RWPE1 (cell line): ENCODE measurements at regions of chr17 and their contacts with region 1.

Region 1: DNA sequence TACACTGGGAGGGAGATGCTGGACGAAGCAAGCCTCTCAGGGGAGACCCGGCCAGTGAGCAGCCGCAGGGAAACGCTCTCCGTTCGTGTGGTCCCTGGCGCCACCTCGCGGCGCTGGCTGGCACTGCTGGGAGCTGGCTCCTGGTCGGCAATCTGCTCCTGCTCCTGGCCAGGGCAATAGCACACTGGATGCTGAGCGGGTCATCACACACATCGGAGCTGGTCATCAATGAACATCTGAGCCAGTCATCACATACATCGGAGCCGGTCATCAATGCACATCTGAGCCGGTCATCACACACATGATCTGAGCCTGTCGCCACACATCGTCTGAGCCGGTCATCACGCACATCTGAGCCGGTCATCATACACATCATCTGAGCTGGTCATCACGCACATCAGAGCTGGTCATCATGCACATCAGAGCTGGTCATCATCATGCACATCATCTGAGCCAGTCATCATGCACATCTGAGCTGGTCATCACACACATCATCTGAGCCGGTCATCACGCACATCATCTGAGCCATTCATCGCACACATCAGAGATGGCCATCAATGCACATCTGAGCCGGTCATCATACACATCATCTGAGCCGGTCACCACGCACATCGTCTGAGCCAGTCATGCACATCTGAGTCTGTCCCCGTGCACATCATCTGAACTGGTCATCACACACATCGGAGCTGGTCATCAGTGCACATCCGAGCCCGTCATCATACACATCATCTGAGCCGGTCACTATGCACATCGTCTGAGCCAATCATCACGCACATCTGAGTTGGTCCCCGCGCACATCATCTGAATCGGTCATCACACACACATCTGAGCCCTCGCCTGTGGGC is 217.3 kb downstream of the RBFOX3 start:
- DNase-seq: peak; percentile 66
- H3K27ac ChIP-seq: no peak overlapping the region
- CTCF ChIP-seq: peak; percentile 97

Region 2: GRCh38 chr17:79087428-79088143 is 306.0 kb before region 1 on chr17:
- CTCF ChIA-PET with region 1: interaction called, 70 read pairs
- POLR2A ChIA-PET with region 1: no interaction called
- DNase-seq: peak; percentile 74
- H3K27ac ChIP-seq: no peak overlapping the region
- CTCF ChIP-seq: peak; percentile 94

Region 3: DNA sequence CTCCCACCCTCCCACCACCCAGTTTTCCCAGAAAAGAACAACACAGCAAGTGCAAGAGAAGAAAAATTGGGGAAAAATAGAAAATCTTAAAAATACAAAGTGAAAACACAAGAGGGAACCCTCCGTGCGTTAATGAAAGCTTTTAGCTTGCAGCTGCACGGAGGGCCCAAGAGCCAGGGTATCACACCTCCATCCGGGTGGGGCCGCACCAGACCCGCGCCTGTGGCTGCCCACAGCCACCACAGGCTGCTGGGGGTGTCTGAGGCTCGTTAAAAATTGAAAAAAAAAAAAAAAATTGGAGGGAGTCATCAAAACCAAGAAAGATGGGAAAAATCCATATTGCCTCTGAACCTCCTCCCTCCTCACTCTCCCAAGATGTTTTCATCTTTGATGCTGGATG is 300.3 kb before region 1 on chr17:
- CTCF ChIA-PET with region 1: interaction called, 70 read pairs
- POLR2A ChIA-PET with region 1: no interaction called
- DNase-seq: no peak
- H3K27ac ChIP-seq: no peak overlapping the region
- CTCF ChIP-seq: no peak

Region 4: GRCh38 chr17:79188048-79188447 is 205.5 kb before region 1 on chr17:
- CTCF ChIA-PET with region 1: interaction called, 88 read pairs
- POLR2A ChIA-PET with region 1: interaction called, 3 read pairs
- DNase-seq: peak; percentile 71
- H3K27ac ChIP-seq: no peak overlapping the region
- CTCF ChIP-seq: peak; percentile 73